Prostate gland (tissue), 2 donors: ENCODE measurements at regions of chr2 and their contacts with region 1.

Region 1: GRCh38 chr2:39227628-39228412 is 15.9 kb downstream of the CDKL4 start:
- DNase-seq: peak; percentile 85
- H3K4me3 ChIP-seq: no peak overlapping the region
- H3K27ac ChIP-seq: no peak overlapping the region
- H3K4me1 ChIP-seq: peaks cover 4% of the 10 kb centered on the region
- H3K27me3 ChIP-seq: no peaks in the 10 kb centered on the region
- CTCF ChIP-seq: peak; percentile 73 to 90 (median 85)
- POLR2A ChIP-seq: no peak

Region 2: GRCh38 chr2:38947240-38948239 is 280.3 kb before region 1 on chr2:
- intact Hi-C with region 1: loop called (anchors 5 kb)
- DNase-seq: peak; percentile 79
- H3K4me3 ChIP-seq: no peak overlapping the region
- H3K27ac ChIP-seq: no peak overlapping the region
- H3K4me1 ChIP-seq: no peaks in the 10 kb centered on the region
- H3K27me3 ChIP-seq: no peaks in the 10 kb centered on the region
- CTCF ChIP-seq: peak; percentile 45 to 75 (median 70)
- POLR2A ChIP-seq: no peak

Region 3: GRCh38 chr2:39059366-39059952 is 168.4 kb before region 1 on chr2:
- intact Hi-C with region 1: loop called (anchors 2 kb)
- DNase-seq: no peak
- H3K4me3 ChIP-seq: no peak overlapping the region
- H3K27ac ChIP-seq: no peak overlapping the region
- H3K4me1 ChIP-seq: no peaks in the 10 kb centered on the region
- H3K27me3 ChIP-seq: no peaks in the 10 kb centered on the region
- CTCF ChIP-seq: peak; percentile 40 to 74 (median 70)
- POLR2A ChIP-seq: no peak

Region 4: DNA sequence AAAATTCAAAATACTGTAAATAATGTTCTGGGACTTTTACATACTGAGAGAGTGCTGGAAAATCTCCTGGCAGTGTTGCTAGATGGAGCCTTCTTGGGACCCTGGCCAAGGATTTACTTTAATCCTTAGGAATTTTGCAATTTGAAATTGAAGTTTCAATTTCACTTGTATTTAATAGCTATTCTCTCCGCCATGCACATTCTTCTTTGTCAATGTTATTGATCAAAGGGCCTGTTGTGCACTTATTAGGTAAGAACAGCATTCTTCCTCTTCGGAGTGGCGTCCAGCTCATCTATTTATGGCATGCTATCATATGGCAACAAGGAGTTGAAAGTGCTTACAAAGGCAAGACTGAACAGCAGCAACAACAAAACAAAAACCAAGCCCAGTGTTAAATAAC is 66.8 kb before region 1 on chr2:
- intact Hi-C with region 1: no loop called
- DNase-seq: no peak
- H3K4me3 ChIP-seq: no peak overlapping the region
- H3K27ac ChIP-seq: no peak overlapping the region
- H3K4me1 ChIP-seq: no peaks in the 10 kb centered on the region
- H3K27me3 ChIP-seq: no peaks in the 10 kb centered on the region
- CTCF ChIP-seq: no peak
- POLR2A ChIP-seq: no peak

Region 5: GRCh38 chr2:39290433-39290832 is 62.6 kb after region 1 on chr2:
- intact Hi-C with region 1: no loop called
- DNase-seq: no peak
- H3K4me3 ChIP-seq: no peak overlapping the region
- H3K27ac ChIP-seq: no peak overlapping the region
- H3K4me1 ChIP-seq: no peaks in the 10 kb centered on the region
- H3K27me3 ChIP-seq: no peaks in the 10 kb centered on the region
- CTCF ChIP-seq: no peak
- POLR2A ChIP-seq: no peak